Endothelial cell of umbilical vein (primary cell): ENCODE measurements at regions of chrX and their contacts with region 1.

Region 1: GRCh38 chrX:104195489-104196084 is 29.3 kb downstream of the FAM199X start:
- DNase-seq: peak; percentile 29
- H3K4me3 ChIP-seq: no peak overlapping the region
- H3K27ac ChIP-seq: no peak overlapping the region
- H3K4me1 ChIP-seq: no peaks in the 10 kb centered on the region
- H3K27me3 ChIP-seq: no peaks in the 10 kb centered on the region
- CTCF ChIP-seq: peak in 1 of 2 donors; percentile 42
- POLR2A ChIP-seq: no peak

Region 2: DNA sequence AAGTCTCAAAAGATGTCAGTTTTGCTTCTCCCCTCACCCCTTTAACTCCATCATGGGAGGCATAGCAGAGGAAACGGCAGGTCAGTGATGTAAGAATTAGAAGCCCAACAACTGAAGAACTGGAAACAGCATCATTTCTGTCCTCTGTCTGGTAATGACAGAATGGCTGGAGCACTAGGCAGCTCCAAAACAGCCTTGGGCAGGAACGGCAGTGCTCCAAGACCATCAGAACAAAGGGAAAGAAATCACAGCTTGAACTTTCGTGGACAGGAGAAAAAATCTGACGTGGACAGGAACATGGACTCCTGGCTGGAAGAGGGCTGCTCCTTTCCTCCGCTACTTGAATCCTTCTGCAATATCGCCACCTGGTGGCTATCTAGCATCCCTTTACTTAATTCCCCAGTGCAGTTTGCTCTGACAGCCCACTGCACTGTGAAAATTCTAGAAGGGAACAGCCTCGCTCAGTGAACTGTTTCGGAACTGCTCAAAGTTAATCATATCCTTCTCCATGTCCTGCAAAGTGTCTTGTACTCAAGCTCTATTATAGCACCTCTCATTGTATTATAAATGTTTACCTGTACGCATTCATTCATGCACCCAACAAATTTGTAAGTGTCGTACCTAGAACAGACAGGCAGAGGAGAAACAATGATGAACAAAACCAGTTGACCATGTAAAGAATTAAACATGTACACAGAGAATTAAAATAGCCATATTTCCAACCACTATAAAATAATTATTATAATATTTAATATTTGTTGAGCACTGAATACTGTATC is 59.2 kb before region 1 on chrX:
- CTCF ChIA-PET with region 1: no interaction called
- POLR2A ChIA-PET with region 1: no interaction called
- dilution Hi-C with region 1: no loop called
- intact Hi-C with region 1: no loop called
- DNase-seq: peak; percentile 73
- H3K4me3 ChIP-seq: peak overlapping the region in 2 of 3 experiments; percentile 16 to 19
- H3K27ac ChIP-seq: no peak overlapping the region
- H3K4me1 ChIP-seq: no peaks in the 10 kb centered on the region
- H3K27me3 ChIP-seq: no peaks in the 10 kb centered on the region
- CTCF ChIP-seq: peak; percentile 54 to 55
- POLR2A ChIP-seq: no peak

Region 3: DNA sequence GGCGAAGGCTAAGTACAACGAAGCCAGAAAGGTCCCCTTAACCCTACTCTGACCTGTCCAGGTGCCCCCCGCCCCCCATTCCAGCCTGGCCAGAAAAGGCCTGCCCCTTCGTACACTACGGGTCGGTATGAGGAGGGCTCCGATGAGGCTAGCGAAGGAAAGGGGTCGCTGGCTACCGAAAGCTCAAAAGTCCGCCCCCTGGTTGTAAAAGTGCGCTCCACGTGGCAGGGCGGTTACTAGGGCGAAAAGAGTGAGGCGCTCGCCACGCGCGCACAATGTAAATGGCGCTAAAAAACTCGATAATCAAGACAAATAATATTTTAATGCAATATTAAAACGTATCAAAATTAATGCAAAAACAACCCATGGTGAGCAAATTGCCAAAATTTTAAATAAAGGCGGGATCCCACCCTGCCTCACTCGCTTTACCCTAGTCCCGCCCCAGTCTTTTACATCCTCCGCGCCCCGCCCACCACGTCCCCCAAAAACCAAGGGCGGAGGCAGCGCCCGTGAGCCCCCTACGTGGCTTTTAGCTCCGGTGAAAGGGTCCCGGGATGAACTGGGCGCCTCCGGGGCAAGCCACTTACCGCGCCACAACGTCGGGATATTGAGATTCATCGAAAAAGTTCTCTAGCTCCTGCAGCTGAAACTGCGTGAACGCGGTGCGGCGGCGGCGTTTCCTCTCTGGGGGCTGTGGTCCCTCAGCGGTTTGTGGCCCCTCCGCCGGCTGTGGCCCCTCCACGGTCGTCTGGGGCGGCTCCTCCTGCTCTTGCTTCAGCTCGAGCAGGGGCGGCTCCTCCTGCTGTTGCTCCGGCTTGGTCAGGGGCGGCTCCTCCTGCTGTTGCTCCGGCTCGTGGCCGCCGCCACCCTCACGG is 58.2 kb after region 1 on chrX:
- CTCF ChIA-PET with region 1: interaction called, 12 read pairs
- POLR2A ChIA-PET with region 1: no interaction called
- dilution Hi-C with region 1: no loop called
- intact Hi-C with region 1: no loop called
- DNase-seq: no peak
- H3K4me3 ChIP-seq: peak overlapping the region in 1 of 3 experiments; percentile 17
- H3K27ac ChIP-seq: no peak overlapping the region
- H3K4me1 ChIP-seq: peaks cover 6% of the 10 kb centered on the region
- H3K27me3 ChIP-seq: peaks cover 20 to 42% of the 10 kb centered on the region in 2 experiments
- CTCF ChIP-seq: no peak
- POLR2A ChIP-seq: no peak

Region 4: GRCh38 chrX:104270920-104271512 is 75.4 kb after region 1 on chrX:
- CTCF ChIA-PET with region 1: interaction called, 17 read pairs
- POLR2A ChIA-PET with region 1: no interaction called
- dilution Hi-C with region 1: no loop called
- intact Hi-C with region 1: loop called (anchors 1 kb)
- DNase-seq: peak; percentile 62
- H3K4me3 ChIP-seq: peak overlapping the region in 1 of 3 experiments; percentile 40
- H3K27ac ChIP-seq: no peak overlapping the region
- H3K4me1 ChIP-seq: peaks cover 2% of the 10 kb centered on the region
- H3K27me3 ChIP-seq: peaks cover 0 to 7% of the 10 kb centered on the region in 2 experiments
- CTCF ChIP-seq: peak; percentile 49 to 55
- POLR2A ChIP-seq: no peak